Mammary epithelial cell (primary cell): ENCODE measurements at regions of chr20 and their contacts with region 1.

Region 1: GRCh38 chr20:54980103-54980960 is 504.9 kb downstream of the DOK5 start:
- DNase-seq: peak; percentile 15
- H3K4me3 ChIP-seq: no peak overlapping the region
- H3K27ac ChIP-seq: no peak overlapping the region
- H3K4me1 ChIP-seq: no peaks in the 10 kb centered on the region
- H3K27me3 ChIP-seq: no peaks in the 10 kb centered on the region
- CTCF ChIP-seq: peak; percentile 47 to 56

Region 2: DNA sequence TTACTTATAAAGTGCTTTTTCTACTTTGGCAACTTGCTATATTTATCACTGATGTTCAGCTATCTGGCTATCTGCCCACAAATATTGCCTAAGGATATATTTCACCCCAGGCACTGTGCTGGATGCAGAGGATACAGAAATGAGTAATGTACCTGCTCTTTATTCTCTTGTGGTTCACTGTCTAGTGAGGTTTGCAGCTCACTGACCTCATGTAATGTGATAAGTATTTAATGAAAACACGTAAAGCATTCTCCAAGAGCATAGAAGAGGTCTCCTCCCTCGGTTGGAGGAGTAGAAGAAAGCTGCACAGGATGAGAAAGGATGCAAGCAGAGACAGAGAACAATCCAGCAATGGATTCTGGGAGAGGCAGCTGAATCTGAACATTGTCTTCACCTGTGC is 414.3 kb after region 1 on chr20:
- CTCF ChIA-PET with region 1: no interaction called
- dilution Hi-C with region 1: no loop called
- in situ Hi-C with region 1: no loop called
- intact Hi-C with region 1: loop called (anchors 1 kb)
- DNase-seq: peak; percentile 70
- H3K4me3 ChIP-seq: no peak overlapping the region
- H3K27ac ChIP-seq: no peak overlapping the region
- H3K4me1 ChIP-seq: no peaks in the 10 kb centered on the region
- H3K27me3 ChIP-seq: no peaks in the 10 kb centered on the region
- CTCF ChIP-seq: no peak